CD8-positive, alpha-beta T cell (primary cell): ENCODE measurements at regions of chr16 and their contacts with region 1.

Region 1: DNA sequence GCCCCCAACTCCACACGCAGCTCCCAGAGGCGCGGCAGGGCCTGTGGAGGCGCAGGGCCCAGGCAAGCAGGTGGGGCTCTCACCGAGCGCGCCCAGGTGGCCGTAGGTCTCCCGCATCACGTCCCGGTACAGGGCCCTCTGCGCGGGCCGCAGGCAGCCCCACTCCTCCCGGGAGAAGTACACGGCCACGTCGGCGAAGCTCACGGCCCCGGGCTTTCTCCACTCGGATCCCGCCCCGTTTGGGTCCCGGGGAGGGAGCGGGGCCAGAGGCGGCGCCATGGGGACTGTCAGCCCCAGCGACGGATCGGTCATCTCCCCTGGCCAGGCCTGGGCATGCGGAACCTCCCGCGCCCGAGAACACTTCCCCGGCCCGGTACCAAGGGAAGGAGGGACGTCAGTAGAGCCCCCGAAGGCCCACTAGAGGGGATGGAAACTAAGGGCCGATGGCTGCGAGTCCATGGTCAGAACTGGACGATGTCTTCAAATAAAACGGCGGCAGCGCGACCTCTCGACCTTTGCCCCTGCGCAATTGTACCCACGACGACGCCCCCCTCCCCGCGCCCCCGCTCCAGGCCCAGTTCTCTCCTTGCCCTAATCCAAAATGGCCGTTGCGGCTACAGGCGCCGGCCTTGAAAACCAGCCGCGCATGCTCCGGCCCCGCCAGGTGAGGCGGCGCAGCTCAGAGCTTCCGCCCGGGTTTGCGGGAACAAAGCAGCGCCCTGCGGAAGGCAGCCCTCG is at the start of gene ZNF747:
- DNase-seq: peak; percentile 77 to 95 (median 92)
- ATAC-seq: peak; percentile 80
- H3K4me3 ChIP-seq: peak within 1 kb of the TSS; percentile 82 to 96
- H3K4me3 Mint-ChIP-seq: peak within 1 kb of the TSS; percentile 89
- H3K27ac ChIP-seq: peak within 1 kb of the TSS; percentile 77 to 97
- H3K27ac Mint-ChIP-seq: peak within 1 kb of the TSS; percentile 96
- H3K4me1 ChIP-seq: peaks cover 13% of the 10 kb centered on the region
- H3K4me1 Mint-ChIP-seq: peaks cover 38% of the 10 kb centered on the region
- H3K27me3 ChIP-seq: no peaks in the 10 kb centered on the region
- H3K27me3 Mint-ChIP-seq: no peaks in the 10 kb centered on the region
- CTCF ChIP-seq: no peak
- total RNA-seq, gene ZNF747: 6.2 to 6.3 TPM

Region 2: GRCh38 chr16:30417529-30418349 is 116.8 kb before region 1 on chr16:
- CTCF ChIA-PET with region 1: no interaction called
- POLR2A ChIA-PET with region 1: interaction called, 11 read pairs
- intact Hi-C with region 1: no loop called
- DNase-seq: peak; percentile 78 to 98 (median 88)
- ATAC-seq: peak; percentile 87
- H3K4me3 ChIP-seq: peak overlapping the region; percentile 52 to 72
- H3K4me3 Mint-ChIP-seq: peak overlapping the region; percentile 74
- H3K27ac ChIP-seq: peak overlapping the region; percentile 81 to 91
- H3K27ac Mint-ChIP-seq: peak overlapping the region; percentile 77
- H3K4me1 ChIP-seq: peaks cover 18% of the 10 kb centered on the region
- H3K4me1 Mint-ChIP-seq: peaks cover 7% of the 10 kb centered on the region
- H3K27me3 ChIP-seq: no peaks in the 10 kb centered on the region
- H3K27me3 Mint-ChIP-seq: no peaks in the 10 kb centered on the region
- CTCF ChIP-seq: no peak

Region 3: DNA sequence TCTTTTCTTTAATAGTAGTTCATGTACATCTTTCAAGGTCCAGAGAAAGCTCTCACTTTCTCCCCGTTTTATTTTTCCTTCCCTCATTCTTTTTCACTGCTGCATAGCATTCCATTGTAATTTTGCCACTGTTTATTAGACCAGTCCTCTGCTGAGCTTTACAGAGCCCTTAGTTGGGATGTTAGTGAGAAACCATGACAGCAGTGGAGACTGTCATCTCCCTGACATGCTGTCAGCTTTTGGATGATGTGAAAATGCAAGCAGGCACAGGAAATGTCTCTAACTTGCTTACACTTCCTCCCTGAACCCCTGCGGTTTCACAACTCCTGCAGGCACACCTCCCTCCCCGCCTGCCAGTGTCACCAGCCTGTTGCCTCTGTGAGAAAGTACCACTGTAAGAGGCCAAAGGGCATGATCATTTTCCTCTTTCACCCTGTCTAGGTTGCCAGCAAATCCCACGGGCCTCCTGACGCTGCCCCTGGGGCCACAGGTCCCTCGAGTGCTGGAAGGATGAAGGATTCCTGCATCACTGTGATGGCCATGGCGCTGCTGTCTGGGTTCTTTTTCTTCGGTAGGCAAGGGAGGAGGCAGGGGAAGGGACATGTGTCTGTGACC is 62.1 kb before region 1 on chr16 and contains the start of gene ITGAL:
- CTCF ChIA-PET with region 1: interaction called, 3 read pairs
- POLR2A ChIA-PET with region 1: interaction called, 5 read pairs
- intact Hi-C with region 1: loop called (anchors 2 kb)
- DNase-seq: peak; percentile 67 to 96 (median 85)
- ATAC-seq: peak; percentile 81
- H3K4me3 ChIP-seq: peak within 1 kb of the TSS; percentile 70 to 89
- H3K4me3 Mint-ChIP-seq: peak within 1 kb of the TSS; percentile 95
- H3K27ac ChIP-seq: peak within 1 kb of the TSS; percentile 80 to 83
- H3K27ac Mint-ChIP-seq: peak within 1 kb of the TSS; percentile 93
- H3K4me1 ChIP-seq: peaks cover 71% of the 10 kb centered on the region
- H3K4me1 Mint-ChIP-seq: peaks cover 68% of the 10 kb centered on the region
- H3K27me3 ChIP-seq: no peaks in the 10 kb centered on the region
- H3K27me3 Mint-ChIP-seq: no peaks in the 10 kb centered on the region
- CTCF ChIP-seq: no peak
- total RNA-seq, gene ITGAL: 187 to 218 TPM

Region 4: DNA sequence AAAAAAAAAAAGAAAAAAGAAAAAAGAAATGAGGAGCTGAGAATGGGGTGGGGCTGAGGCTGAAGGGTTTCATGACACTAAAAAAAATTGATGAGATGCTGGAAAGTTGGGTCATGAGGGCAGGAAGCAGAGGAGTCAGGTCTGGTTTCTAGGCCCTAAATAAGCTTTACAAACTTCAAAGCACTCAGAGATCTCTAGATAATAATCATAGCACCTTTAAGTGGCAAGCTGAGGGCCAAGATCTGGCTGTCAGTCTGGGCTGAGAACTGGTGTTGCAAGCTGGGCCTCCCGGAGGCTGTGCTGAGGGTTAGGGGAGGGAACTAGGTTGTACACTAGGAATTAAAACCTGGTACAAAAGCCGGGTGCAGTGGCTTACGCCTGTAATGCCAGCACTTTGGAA is 17.2 kb after region 1 on chr16:
- CTCF ChIA-PET with region 1: interaction called, 39 read pairs
- POLR2A ChIA-PET with region 1: interaction called, 60 read pairs
- intact Hi-C with region 1: loop called in 1 of 2 experiments (anchors 1 kb)
- DNase-seq: peak in 8 of 9 experiments; percentile 35 to 91 (median 70)
- ATAC-seq: peak; percentile 87
- H3K4me3 ChIP-seq: no peak overlapping the region
- H3K4me3 Mint-ChIP-seq: peak overlapping the region; percentile 51
- H3K27ac ChIP-seq: peak overlapping the region; percentile 19 to 57
- H3K27ac Mint-ChIP-seq: peak overlapping the region; percentile 93
- H3K4me1 ChIP-seq: peaks cover 33% of the 10 kb centered on the region
- H3K4me1 Mint-ChIP-seq: peaks cover 52% of the 10 kb centered on the region
- H3K27me3 ChIP-seq: no peaks in the 10 kb centered on the region
- H3K27me3 Mint-ChIP-seq: no peaks in the 10 kb centered on the region
- CTCF ChIP-seq: no peak

Region 5: GRCh38 chr16:30557957-30558788 is 23.6 kb after region 1 on chr16 and contains the start of gene ZNF764:
- CTCF ChIA-PET with region 1: interaction called, 39 read pairs
- POLR2A ChIA-PET with region 1: interaction called, 60 read pairs
- intact Hi-C with region 1: loop called (anchors 1 kb)
- DNase-seq: peak; percentile 88 to 98 (median 96)
- ATAC-seq: peak; percentile 90
- H3K4me3 ChIP-seq: peak within 1 kb of the TSS; percentile 68 to 84
- H3K4me3 Mint-ChIP-seq: peak within 1 kb of the TSS; percentile 84
- H3K27ac ChIP-seq: peak within 1 kb of the TSS; percentile 80 to 88
- H3K27ac Mint-ChIP-seq: peak within 1 kb of the TSS; percentile 93
- H3K4me1 ChIP-seq: peaks cover 28% of the 10 kb centered on the region
- H3K4me1 Mint-ChIP-seq: peaks cover 35% of the 10 kb centered on the region
- H3K27me3 ChIP-seq: no peaks in the 10 kb centered on the region
- H3K27me3 Mint-ChIP-seq: no peaks in the 10 kb centered on the region
- CTCF ChIP-seq: no peak
- total RNA-seq, gene ZNF764: 15.0 to 15.6 TPM

Region 6: DNA sequence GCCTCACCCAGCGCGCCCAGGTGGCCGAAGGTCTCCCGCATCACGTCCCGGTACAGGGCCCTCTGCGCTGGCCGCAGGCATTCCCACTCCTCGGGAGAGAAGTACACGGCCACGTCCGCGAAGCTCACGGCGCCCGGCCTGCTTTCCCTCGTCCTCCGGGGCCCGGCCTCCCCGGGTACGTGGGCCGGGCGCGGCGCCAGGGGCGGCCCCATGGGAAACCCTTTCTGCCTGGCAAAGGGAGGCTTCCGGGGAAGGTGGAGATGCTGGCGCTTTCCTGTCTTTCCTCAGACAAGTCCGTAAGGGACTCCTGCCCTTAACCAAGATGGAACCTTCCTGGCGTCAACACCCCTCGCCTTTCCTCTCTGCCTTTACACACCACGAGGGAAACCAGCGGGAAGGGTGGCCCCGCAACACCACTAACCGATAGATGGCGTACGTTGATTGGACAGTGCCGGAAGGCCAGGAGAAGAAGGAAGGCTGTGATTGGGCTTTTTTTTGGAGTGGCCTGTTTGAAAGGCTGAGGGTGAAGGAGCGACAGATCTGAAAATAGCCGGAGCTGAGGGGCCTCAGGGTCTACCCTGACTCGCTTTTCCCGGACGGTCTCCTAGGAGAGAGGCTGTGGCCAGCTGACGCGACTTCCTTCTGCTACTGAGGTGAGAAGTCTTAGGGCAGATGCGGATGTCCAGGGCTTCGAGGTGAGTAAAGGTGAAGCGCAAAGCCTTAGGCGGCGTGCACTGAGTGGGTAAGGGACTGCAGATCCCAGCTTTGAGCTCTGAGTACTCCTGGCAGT is 51.1 kb after region 1 on chr16 and contains the start of gene ZNF785:
- CTCF ChIA-PET with region 1: interaction called, 5 read pairs
- POLR2A ChIA-PET with region 1: interaction called, 5 read pairs
- intact Hi-C with region 1: loop called (anchors 1 kb)
- DNase-seq: peak; percentile 81 to 98 (median 91)
- ATAC-seq: peak; percentile 99
- H3K4me3 ChIP-seq: peak within 1 kb of the TSS; percentile 68 to 78
- H3K4me3 Mint-ChIP-seq: peak within 1 kb of the TSS; percentile 94
- H3K27ac ChIP-seq: peak within 1 kb of the TSS; percentile 44 to 61
- H3K27ac Mint-ChIP-seq: peak within 1 kb of the TSS; percentile 91
- H3K4me1 ChIP-seq: peaks cover 12% of the 10 kb centered on the region
- H3K4me1 Mint-ChIP-seq: peaks cover 27% of the 10 kb centered on the region
- H3K27me3 ChIP-seq: no peaks in the 10 kb centered on the region
- H3K27me3 Mint-ChIP-seq: no peaks in the 10 kb centered on the region
- CTCF ChIP-seq: no peak
- total RNA-seq, gene ZNF785: 5.0 to 6.9 TPM

Region 7: DNA sequence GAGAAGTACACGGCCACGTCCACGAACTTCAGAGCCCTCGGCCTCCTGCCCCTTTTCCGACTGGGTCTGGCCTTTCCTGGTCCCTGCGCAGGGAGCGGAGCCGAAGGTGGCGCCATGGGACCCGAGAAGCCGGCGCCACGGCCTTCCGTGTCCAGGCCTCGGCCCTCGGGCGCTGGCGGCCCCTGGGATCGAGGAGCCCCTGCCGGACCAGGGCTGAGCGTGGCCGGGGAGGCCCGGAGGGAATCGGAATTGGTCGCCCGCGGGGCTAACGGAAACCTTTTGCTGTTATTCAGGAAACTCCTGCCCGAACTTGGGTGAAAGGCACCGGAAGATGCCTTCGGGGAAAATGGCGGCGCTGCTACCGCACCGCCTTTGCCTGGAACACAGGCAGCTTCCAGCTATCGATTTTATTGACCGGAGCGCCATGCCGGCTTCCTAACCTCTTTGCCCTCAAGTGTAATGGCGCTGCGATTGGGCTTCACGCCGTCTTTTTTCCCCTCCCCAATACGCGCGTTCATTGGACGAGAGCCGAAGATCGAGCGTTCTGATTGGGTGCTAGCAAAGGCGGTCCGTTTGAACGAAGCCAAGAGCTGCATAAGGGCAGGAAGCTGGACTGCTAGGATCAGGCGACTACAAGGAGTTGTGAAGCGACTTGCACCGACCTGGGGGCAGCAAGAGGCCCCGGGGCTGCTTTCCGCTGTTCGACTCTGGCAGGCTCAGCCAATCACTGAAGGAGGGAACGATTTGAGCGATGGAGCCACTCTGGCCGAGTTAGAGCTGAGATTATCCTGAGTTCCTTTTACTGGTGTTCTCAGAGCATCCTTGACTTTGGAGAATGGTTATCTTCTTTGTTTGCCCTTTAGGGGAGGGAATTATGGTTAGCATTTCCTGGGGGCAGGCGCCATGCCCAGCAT is 75.6 kb after region 1 on chr16 and contains the start of gene ZNF689:
- CTCF ChIA-PET with region 1: interaction called, 3 read pairs
- POLR2A ChIA-PET with region 1: no interaction called
- intact Hi-C with region 1: loop called (anchors 1 kb)
- DNase-seq: peak; percentile 90 to 98 (median 94)
- ATAC-seq: peak; percentile 88
- H3K4me3 ChIP-seq: peak within 1 kb of the TSS; percentile 69 to 93
- H3K4me3 Mint-ChIP-seq: peak within 1 kb of the TSS; percentile 95
- H3K27ac ChIP-seq: peak within 1 kb of the TSS; percentile 91 to 93
- H3K27ac Mint-ChIP-seq: peak within 1 kb of the TSS; percentile 98
- H3K4me1 ChIP-seq: peaks cover 12% of the 10 kb centered on the region
- H3K4me1 Mint-ChIP-seq: peaks cover 24% of the 10 kb centered on the region
- H3K27me3 ChIP-seq: peaks cover 0 to 2% of the 10 kb centered on the region in 2 experiments
- H3K27me3 Mint-ChIP-seq: no peaks in the 10 kb centered on the region
- CTCF ChIP-seq: no peak
- total RNA-seq, gene ZNF689: 15.6 to 17.5 TPM